ENCODE measurements at regions of chr11 and their contacts with region 1.

Region 1: DNA sequence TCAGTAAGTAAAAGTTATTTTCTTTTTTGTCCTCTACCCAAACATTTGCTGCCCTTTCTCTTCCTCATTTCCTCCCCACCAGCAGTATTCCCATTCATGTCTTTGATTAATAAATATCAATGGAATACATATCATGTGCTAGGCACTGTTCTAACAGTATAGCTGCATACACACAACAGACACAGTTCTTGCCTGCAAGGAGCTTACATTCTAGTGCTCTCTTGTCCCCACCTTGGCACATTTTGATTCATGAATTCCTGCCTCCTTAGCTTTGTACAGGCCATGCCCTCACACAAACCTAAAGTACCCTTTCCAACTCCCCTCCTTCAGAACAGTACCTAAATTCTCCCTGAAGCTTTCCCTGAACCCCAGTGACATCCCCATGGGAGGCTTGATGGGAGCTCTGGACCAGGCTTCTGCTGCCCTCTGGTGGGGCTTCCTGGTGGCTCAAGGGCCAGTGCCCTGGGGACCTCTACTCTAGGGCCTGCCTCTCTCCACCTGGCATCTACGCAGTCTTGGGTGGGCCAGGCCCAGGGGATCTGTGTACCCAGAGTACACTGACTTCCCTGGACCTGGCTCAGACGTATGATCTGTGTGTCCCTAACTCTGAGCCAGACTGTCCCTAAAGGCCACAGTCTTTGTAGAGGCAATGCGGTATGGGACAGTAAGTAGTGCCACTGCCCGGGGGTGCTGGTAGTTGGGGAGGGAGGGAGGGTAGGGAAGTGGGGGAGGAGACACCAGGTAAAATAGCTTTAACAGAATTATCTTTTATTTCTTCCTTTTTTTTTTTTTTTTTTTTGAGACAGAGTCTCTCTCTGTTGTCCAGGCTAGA is 14.1 kb downstream of the RPS13 start:
- DNase-seq: peak; percentile 72
- ATAC-seq: peak; percentile 88

Region 2: DNA sequence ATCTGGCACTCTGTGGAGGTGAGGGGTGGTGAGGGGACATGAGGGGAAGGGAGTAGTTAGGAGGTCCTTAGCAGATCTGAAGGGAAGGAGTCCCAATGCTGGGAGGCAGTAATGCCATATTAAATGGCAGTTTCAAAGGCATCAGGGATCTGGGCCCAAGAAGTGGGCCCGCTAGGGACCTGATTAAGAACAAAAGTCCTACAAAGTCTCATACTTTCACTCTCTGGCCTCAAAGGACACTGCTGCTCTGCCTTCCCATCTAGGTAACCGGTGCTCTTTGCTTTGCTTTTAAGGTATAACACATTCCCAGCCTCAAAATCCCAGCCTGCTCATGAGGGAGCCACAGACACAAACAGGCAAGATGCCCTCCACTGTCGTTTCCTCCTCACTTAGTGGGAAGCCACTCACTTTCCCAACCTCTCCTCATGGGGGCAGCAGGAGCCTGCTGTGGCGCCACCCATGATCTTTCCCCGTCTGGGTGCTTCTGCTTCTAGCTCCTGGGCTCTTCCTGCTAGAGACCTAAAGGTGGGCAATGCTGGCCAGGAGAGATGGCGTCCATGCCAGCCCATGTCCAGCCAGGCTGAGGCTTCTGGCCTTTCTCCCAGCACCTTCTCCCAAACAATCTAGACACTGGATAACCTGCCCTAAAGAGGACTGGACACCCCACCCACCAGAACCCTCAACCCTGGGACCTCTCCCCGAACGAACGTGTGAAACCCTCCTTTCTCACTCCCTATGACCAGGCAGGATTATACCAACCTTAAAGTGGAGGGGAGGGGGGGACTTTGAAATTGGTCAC is 117.5 kb before region 1 on chr11:
- intact Hi-C with region 1: loop called (anchors 1 kb)
- DNase-seq: no peak
- ATAC-seq: peak; percentile 76

Region 3: GRCh38 chr11:16959602-16960001 is 103.8 kb before region 1 on chr11:
- intact Hi-C with region 1: no loop called
- DNase-seq: no peak
- ATAC-seq: no peak

Measured in Right ventricle myocardium inferior (tissue), 1 donor.